Mammary epithelial cell (primary cell): ENCODE measurements at regions of chr20 and their contacts with region 1.

Region 1: GRCh38 chr20:52923123-52923937 is 48.8 kb upstream of the TSHZ2 start:
- DNase-seq: peak; percentile 99
- H3K4me3 ChIP-seq: no peak overlapping the region
- H3K27ac ChIP-seq: peak overlapping the region; percentile 91
- H3K4me1 ChIP-seq: peaks cover 28% of the 10 kb centered on the region
- H3K27me3 ChIP-seq: no peaks in the 10 kb centered on the region
- CTCF ChIP-seq: peak in 1 of 2 donors; percentile 18

Region 2: GRCh38 chr20:52847029-52847660 is 76.2 kb before region 1 on chr20:
- CTCF ChIA-PET with region 1: no interaction called
- dilution Hi-C with region 1: no loop called
- in situ Hi-C with region 1: no loop called
- intact Hi-C with region 1: loop called (anchors 2 kb)
- DNase-seq: peak; percentile 79
- H3K4me3 ChIP-seq: no peak overlapping the region
- H3K27ac ChIP-seq: peak overlapping the region; percentile 58
- H3K4me1 ChIP-seq: peaks cover 12% of the 10 kb centered on the region
- H3K27me3 ChIP-seq: no peaks in the 10 kb centered on the region
- CTCF ChIP-seq: no peak

Region 3: GRCh38 chr20:52943185-52943841 is 20.0 kb after region 1 on chr20:
- CTCF ChIA-PET with region 1: no interaction called
- dilution Hi-C with region 1: no loop called
- in situ Hi-C with region 1: no loop called
- intact Hi-C with region 1: loop called (anchors 1 kb)
- DNase-seq: peak; percentile 91
- H3K4me3 ChIP-seq: no peak overlapping the region
- H3K27ac ChIP-seq: peak overlapping the region; percentile 66
- H3K4me1 ChIP-seq: peaks cover 40% of the 10 kb centered on the region
- H3K27me3 ChIP-seq: no peaks in the 10 kb centered on the region
- CTCF ChIP-seq: no peak

Region 4: GRCh38 chr20:53080969-53081871 is 157.9 kb after region 1 on chr20:
- CTCF ChIA-PET with region 1: no interaction called
- dilution Hi-C with region 1: no loop called
- in situ Hi-C with region 1: no loop called
- intact Hi-C with region 1: loop called (anchors 2 kb)
- DNase-seq: peak; percentile 81
- H3K4me3 ChIP-seq: peak overlapping the region; percentile 16 to 32 (median 26)
- H3K27ac ChIP-seq: peak overlapping the region; percentile 87
- H3K4me1 ChIP-seq: peaks cover 33% of the 10 kb centered on the region
- H3K27me3 ChIP-seq: no peaks in the 10 kb centered on the region
- CTCF ChIP-seq: no peak